ENCODE measurements at regions of chr16 and their contacts with region 1.

Region 1: GRCh38 chr16:75110637-75111513 is 5.7 kb downstream of the LDHD start:
- DNase-seq: peak; percentile 89
- ATAC-seq: peak; percentile 49
- H3K4me3 ChIP-seq: no peak overlapping the region; the same call in 1 of the 2 replicates
- H3K27ac ChIP-seq: peak overlapping the region; percentile 97
- H3K4me1 ChIP-seq: peaks cover 43% of the 10 kb centered on the region
- H3K27me3 ChIP-seq: no peaks in the 10 kb centered on the region
- CTCF ChIP-seq: peak; percentile 75

Region 2: DNA sequence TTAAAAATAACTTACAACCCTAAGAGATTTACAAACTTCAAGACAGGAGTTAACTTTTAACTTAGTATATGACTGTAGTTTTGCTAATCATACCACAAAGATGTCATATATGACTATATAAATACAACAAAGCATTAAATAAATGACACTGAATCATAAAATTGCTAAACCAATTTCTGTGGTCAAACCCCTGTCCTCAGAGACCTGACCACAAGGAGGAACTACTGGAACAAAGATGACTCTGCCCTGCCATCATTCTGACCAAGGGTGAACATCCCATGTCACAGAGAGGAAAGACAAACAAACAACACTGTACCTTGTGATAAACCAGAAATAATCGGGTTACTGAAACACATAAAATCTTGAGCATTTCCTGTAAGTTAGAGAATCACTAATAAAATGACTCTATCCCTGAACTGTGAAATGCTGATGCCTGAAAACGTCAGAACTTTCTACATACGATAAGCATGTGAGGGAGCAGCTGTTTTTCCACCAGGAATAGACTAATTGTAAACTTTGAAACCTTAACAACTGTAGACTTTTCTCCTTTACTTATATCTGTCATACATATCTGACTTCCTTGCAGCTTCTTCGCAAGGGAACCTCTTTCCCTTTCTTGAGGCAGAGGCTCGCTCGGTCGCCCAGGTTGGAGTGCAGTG is 173.8 kb before region 1 on chr16:
- CTCF ChIA-PET with region 1: no interaction called
- POLR2A ChIA-PET with region 1: no interaction called
- intact Hi-C with region 1: loop called (anchors 1 kb)
- DNase-seq: peak; percentile 93
- ATAC-seq: peak; percentile 100
- H3K4me3 ChIP-seq: no peak overlapping the region
- H3K27ac ChIP-seq: peak overlapping the region; percentile 99
- H3K4me1 ChIP-seq: peaks cover 22% of the 10 kb centered on the region
- H3K27me3 ChIP-seq: no peaks in the 10 kb centered on the region
- CTCF ChIP-seq: no peak

Region 3: DNA sequence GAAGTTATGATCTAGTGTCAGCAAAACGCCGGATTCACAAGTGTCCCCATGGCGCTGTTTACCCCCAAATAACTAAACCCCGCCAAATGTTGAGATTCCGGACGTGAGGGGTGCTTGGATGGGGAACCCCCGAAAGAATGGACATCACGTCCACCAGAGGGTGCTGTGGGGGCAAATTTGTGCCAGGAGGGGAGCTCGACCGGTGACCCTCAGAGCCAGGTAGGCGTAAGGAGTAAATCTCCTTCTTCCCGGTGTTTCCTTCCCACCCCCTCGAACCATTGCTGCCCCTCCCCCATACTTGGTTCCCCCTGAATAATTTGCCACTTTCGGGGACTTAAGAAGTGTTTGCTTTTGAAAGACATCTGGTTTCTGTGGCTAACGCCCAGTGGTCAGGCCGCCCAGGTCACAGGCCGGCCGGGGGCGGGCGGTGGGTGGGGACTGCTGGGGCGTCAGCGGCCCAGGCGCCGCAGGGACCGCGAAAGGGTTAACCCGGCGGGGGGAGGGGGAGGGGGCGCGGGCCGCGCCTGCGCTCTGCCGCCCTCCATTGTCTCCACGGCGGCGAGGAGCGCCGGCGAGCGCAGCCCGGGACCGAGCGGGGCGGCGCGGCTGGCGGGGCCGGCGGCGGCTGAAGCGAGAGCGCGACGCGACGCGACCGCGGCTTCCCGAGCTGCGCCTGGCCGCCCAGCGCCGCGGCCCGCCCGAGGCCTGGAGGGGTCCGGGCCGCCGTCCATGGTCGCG is 112.2 kb before region 1 on chr16 and contains the start of gene ZNRF1:
- CTCF ChIA-PET with region 1: interaction called, 44 read pairs
- POLR2A ChIA-PET with region 1: interaction called, 3 read pairs
- intact Hi-C with region 1: loop called (anchors 1 kb)
- DNase-seq: peak; percentile 75
- ATAC-seq: peak; percentile 66
- H3K4me3 ChIP-seq: peak within 1 kb of the TSS; percentile 85
- H3K27ac ChIP-seq: peak within 1 kb of the TSS; percentile 97
- H3K4me1 ChIP-seq: peaks cover 41% of the 10 kb centered on the region
- H3K27me3 ChIP-seq: no peaks in the 10 kb centered on the region
- CTCF ChIP-seq: peak; percentile 75
- total RNA-seq, gene ZNRF1: 60.4 and 83.6 TPM in 2 replicates

Region 4: DNA sequence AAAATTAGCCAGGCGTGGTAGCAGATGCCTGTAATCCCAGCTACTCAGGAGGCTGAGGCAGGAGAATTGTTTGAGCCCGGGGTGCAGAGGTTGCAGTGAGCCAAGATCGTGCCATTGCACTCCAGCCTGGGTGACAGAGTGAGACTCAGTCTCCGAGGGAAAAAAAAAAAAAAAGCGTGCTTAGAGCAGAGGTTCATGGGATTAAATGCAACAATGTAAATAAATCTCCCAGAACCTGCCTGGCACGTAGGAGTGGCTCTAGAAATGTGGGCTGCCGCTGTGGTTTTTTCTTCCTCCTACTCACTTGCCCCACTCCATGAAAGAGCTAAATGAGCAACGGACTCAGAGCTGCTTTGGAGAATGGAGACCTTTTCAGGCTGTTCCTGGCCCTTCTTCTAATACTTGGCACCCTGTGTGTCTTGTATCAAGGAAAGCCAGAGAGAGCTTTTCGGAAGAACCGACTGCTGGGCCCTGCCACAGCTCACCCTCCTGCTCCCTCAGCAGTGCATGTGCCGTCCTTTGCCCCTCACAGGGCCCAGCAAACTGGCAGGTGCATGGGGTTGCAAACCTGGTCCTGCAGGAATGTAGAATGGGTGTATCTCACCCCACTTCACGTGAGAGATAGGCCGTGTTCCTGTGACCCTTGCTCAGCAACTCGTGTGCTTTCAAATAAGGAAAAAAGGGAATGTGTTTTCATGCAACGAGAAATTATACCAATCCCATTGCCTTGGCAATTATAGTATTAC is 46.3 kb before region 1 on chr16:
- CTCF ChIA-PET with region 1: interaction called, 3 read pairs
- POLR2A ChIA-PET with region 1: no interaction called
- intact Hi-C with region 1: loop called (anchors 2 kb)
- DNase-seq: peak; percentile 74
- ATAC-seq: peak; percentile 27
- H3K4me3 ChIP-seq: peak overlapping the region; percentile 28; the same call in 1 of the 2 replicates
- H3K27ac ChIP-seq: peak overlapping the region; percentile 81
- H3K4me1 ChIP-seq: peaks cover 22% of the 10 kb centered on the region
- H3K27me3 ChIP-seq: no peaks in the 10 kb centered on the region
- CTCF ChIP-seq: no peak

Measured in PC-3 (cell line).